Activated CD4-positive, alpha-beta T cell treated with anti-CD3 and anti-CD28 coated beads, Interleukin-2, amount 10 ng/mL, durations not matched to agents 24 days and 14 days (primary cell): ENCODE measurements at regions of chr15 and their contacts with region 1.

Region 1: GRCh38 chr15:48861813-48862431 is 16.0 kb upstream of the EID1 start:
- DNase-seq: peak; percentile 86
- H3K4me3 Mint-ChIP-seq: no peak overlapping the region
- H3K27ac Mint-ChIP-seq: no peak overlapping the region
- H3K4me1 Mint-ChIP-seq: peaks cover 14% of the 10 kb centered on the region
- H3K27me3 Mint-ChIP-seq: peaks cover 2% of the 10 kb centered on the region

Region 2: GRCh38 chr15:48833506-48834231 is 28.3 kb before region 1 on chr15:
- intact Hi-C with region 1: no loop called
- DNase-seq: no peak
- H3K4me3 Mint-ChIP-seq: no peak overlapping the region
- H3K27ac Mint-ChIP-seq: no peak overlapping the region
- H3K4me1 Mint-ChIP-seq: no peaks in the 10 kb centered on the region
- H3K27me3 Mint-ChIP-seq: peaks cover 4% of the 10 kb centered on the region

Region 3: DNA sequence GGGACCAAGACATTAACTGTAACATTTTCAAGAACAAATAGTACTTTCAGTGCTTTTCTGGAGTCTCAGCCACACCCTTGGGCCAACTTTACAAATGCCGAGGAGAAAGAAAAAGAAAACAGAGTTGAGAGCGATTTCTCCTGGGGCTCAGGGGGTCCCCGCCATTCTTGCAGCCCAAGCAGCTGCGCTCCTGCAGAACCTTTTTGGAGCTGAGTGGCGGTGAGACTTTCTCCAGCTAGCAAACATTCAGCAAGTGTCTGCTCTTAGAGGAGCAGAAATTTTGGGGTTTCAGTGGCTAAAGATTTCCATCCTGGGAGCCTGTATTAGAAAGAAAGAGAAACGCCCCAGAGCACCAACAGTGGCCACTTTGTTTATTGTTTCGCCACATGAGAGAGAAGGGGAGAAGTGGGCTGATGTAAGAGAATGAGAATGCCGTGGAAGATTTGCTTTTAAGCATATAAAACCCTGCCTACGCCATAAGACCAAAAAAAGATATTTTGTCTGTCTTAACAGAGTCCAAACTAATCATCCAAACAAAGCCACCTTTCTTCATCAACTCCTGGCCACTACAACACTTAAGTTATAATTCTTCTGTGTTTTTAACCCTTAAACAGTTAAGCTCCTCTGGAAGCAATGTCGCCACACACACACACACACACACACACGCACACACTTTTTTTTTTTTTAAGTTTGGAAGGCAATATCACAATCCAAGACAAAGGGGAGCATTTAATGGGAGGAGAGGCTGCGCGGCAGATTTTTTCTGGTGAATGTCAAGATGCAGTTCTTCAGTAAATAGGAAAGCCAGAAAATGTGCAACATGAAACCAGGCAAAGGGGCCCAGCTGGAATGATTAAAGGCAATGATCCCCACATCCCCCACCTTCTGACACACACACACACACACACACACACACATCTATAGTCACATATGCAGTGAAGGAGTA is 35.2 kb after region 1 on chr15:
- intact Hi-C with region 1: no loop called
- DNase-seq: no peak
- H3K4me3 Mint-ChIP-seq: peak overlapping the region; percentile 33
- H3K27ac Mint-ChIP-seq: peak overlapping the region; percentile 76
- H3K4me1 Mint-ChIP-seq: peaks cover 22% of the 10 kb centered on the region
- H3K27me3 Mint-ChIP-seq: peaks cover 4% of the 10 kb centered on the region

Region 4: GRCh38 chr15:48965972-48966371 is 104.0 kb after region 1 on chr15:
- intact Hi-C with region 1: loop called (anchors 1 kb)
- DNase-seq: peak; percentile 72
- H3K4me3 Mint-ChIP-seq: peak overlapping the region; percentile 58
- H3K27ac Mint-ChIP-seq: peak overlapping the region; percentile 93
- H3K4me1 Mint-ChIP-seq: peaks cover 53% of the 10 kb centered on the region
- H3K27me3 Mint-ChIP-seq: peaks cover 2% of the 10 kb centered on the region

Region 5: GRCh38 chr15:49046220-49047102 is 184.5 kb after region 1 on chr15 and contains the start of gene SECISBP2L:
- intact Hi-C with region 1: loop called (anchors 5 kb)
- DNase-seq: peak; percentile 97
- H3K4me3 Mint-ChIP-seq: peak within 1 kb of the TSS; percentile 98
- H3K27ac Mint-ChIP-seq: peak within 1 kb of the TSS; percentile 90
- H3K4me1 Mint-ChIP-seq: peaks cover 22% of the 10 kb centered on the region
- H3K27me3 Mint-ChIP-seq: no peaks in the 10 kb centered on the region
- total RNA-seq, gene SECISBP2L: 38.1 and 40.0 TPM in 2 replicates

Region 6: GRCh38 chr15:49235446-49236124 is 373.7 kb after region 1 on chr15:
- intact Hi-C with region 1: loop called (anchors 10 kb)
- DNase-seq: peak; percentile 86
- H3K4me3 Mint-ChIP-seq: no peak overlapping the region
- H3K27ac Mint-ChIP-seq: peak overlapping the region; percentile 11
- H3K4me1 Mint-ChIP-seq: peaks cover 15% of the 10 kb centered on the region
- H3K27me3 Mint-ChIP-seq: no peaks in the 10 kb centered on the region